ENCODE measurements at regions of chr15 and their contacts with region 1.

Region 1: DNA sequence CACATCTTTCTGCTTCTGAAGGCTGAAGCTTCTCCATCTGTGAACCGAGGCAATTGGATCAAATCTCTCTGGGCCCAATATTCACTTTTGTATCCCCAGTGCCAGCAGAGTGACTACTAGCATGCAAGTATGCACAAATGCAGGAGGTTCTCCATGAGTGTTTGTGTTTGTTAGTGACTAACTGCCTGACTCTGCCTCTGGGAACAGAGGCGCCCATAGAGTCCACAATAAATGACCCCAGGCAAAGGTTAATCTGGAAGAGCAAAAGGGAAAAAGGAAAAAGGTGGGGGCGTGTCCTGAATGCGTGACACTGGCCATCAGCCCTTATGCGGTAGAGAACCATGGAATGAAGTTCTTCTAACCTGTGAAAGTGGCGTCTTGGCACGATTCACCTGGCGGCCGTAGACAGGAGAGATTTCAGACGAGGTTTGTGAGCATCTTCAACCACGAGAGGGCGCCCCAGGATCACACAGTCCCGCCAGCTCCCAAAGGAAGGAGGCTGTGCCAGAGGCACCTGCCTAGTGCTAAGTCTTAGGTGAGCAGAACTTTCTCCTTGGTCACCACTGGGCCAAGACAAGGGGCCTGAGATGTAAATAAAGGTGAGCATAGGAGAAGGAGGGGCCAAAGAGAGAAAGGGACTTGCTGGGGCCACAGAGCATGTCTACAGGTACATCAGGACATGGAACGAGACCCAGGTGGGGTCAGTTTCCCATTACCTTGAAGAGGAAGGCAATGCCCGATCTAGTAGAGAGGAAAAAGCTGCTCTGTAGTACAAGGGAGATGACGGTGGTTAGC is 44.2 kb downstream of the RBPMS2 start:
- DNase-seq: peak; percentile 67
- ATAC-seq: peak; percentile 79
- H3K4me3 ChIP-seq: no peak overlapping the region
- H3K27ac ChIP-seq: no peak overlapping the region
- H3K4me1 ChIP-seq: peaks cover 33% of the 10 kb centered on the region
- H3K27me3 ChIP-seq: peaks cover 0 to 12% of the 10 kb centered on the region in 2 experiments; a peak in 2 of 5 replicates
- CTCF ChIP-seq: peak; percentile 96
- EP300 ChIP-seq: no peak
- POLR2A ChIP-seq: no peak
- RAD21 ChIP-seq: peak; percentile 92

Region 2: GRCh38 chr15:64690578-64691296 is 40.5 kb before region 1 on chr15:
- CTCF ChIA-PET with region 1: interaction called, 56 read pairs
- POLR2A ChIA-PET with region 1: interaction called, 3 read pairs
- in situ Hi-C with region 1: loop called (anchors 5 kb)
- intact Hi-C with region 1: loop called (anchors 1 kb)
- DNase-seq: no peak
- ATAC-seq: peak; percentile 19; the same call in 1 of the 3 replicates
- H3K4me3 ChIP-seq: no peak overlapping the region
- H3K27ac ChIP-seq: no peak overlapping the region
- H3K4me1 ChIP-seq: peaks cover 23% of the 10 kb centered on the region
- H3K27me3 ChIP-seq: no peaks in the 10 kb centered on the region
- CTCF ChIP-seq: no peak
- EP300 ChIP-seq: no peak
- POLR2A ChIP-seq: no peak
- RAD21 ChIP-seq: no peak

Region 3: DNA sequence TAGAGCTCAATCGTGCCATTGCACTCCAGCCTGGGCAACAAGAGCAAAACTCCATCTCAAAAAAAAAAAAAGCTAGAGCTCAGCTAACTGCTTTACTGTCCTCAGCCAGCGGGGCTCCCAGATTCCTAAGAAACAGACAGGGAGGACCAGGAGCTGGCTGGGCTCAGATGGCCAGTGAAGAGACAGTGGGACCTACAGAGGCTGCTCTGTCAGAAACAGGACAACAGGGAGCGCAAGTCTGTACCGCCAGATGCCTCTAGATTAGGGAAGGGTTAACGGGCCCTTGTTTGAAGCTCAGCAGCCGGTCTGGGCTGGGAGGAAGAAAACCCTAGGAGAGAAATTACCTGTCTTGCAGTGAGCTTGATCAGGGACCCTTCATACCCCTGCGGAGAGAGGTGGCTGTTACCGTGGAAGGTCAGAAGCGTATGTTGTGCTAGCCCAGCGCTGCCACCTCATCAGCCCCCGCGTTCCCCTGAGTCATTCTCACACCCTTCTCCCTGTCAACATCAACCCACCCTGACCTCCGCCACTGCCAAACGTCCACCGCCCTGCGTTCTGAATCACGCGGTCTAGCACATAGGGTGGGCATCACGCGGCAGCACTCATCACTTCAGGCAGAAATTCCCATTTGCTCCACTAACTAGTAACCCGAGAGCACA is 18.9 kb after region 1 on chr15:
- CTCF ChIA-PET with region 1: no interaction called
- POLR2A ChIA-PET with region 1: no interaction called
- in situ Hi-C with region 1: no loop called
- intact Hi-C with region 1: no loop called
- DNase-seq: no peak
- ATAC-seq: peak; percentile 64
- H3K4me3 ChIP-seq: no peak overlapping the region
- H3K27ac ChIP-seq: no peak overlapping the region
- H3K4me1 ChIP-seq: peaks cover 12% of the 10 kb centered on the region
- H3K27me3 ChIP-seq: peaks cover 3 to 72% of the 10 kb centered on the region in 2 experiments; a peak in 4 of 5 replicates
- CTCF ChIP-seq: no peak
- EP300 ChIP-seq: no peak
- POLR2A ChIP-seq: no peak
- RAD21 ChIP-seq: no peak

Region 4: GRCh38 chr15:64809649-64810496 is 78.7 kb after region 1 on chr15:
- CTCF ChIA-PET with region 1: interaction called, 46 read pairs
- POLR2A ChIA-PET with region 1: interaction called, 8 read pairs
- in situ Hi-C with region 1: loop called (anchors 5 kb)
- intact Hi-C with region 1: loop called (anchors 1 kb)
- DNase-seq: peak; percentile 61
- ATAC-seq: peak; percentile 76
- H3K4me3 ChIP-seq: no peak overlapping the region
- H3K27ac ChIP-seq: no peak overlapping the region
- H3K4me1 ChIP-seq: peaks cover 29% of the 10 kb centered on the region
- H3K27me3 ChIP-seq: peaks cover 1 to 17% of the 10 kb centered on the region in 2 experiments; a peak in 2 of 5 replicates
- CTCF ChIP-seq: peak; percentile 94
- EP300 ChIP-seq: no peak
- POLR2A ChIP-seq: no peak
- RAD21 ChIP-seq: peak; percentile 83

Region 5: GRCh38 chr15:64893481-64894394 is 162.5 kb after region 1 on chr15:
- CTCF ChIA-PET with region 1: interaction called, 3 read pairs
- POLR2A ChIA-PET with region 1: interaction called, 3 read pairs
- in situ Hi-C with region 1: no loop called
- intact Hi-C with region 1: loop called (anchors 5 kb)
- DNase-seq: peak; percentile 79
- ATAC-seq: peak; percentile 74
- H3K4me3 ChIP-seq: peak overlapping the region in 2 of 3 experiments; percentile 8 to 74; a peak in 2 of 6 replicates
- H3K27ac ChIP-seq: no peak overlapping the region
- H3K4me1 ChIP-seq: peaks cover 63% of the 10 kb centered on the region
- H3K27me3 ChIP-seq: peaks cover 0 to 22% of the 10 kb centered on the region in 2 experiments; a peak in 3 of 5 replicates
- CTCF ChIP-seq: no peak
- EP300 ChIP-seq: no peak
- POLR2A ChIP-seq: 0 out of 4 replicates have a peak, but pooled peaks of 1 of the 2 experiments have one; percentile 39
- RAD21 ChIP-seq: no peak

Region 6: GRCh38 chr15:64905119-64905831 is 174.1 kb after region 1 on chr15:
- CTCF ChIA-PET with region 1: interaction called, 20 read pairs
- POLR2A ChIA-PET with region 1: no interaction called
- in situ Hi-C with region 1: no loop called
- intact Hi-C with region 1: loop called (anchors 1 kb)
- DNase-seq: peak; percentile 22
- ATAC-seq: peak; percentile 89
- H3K4me3 ChIP-seq: no peak overlapping the region
- H3K27ac ChIP-seq: no peak overlapping the region
- H3K4me1 ChIP-seq: peaks cover 4% of the 10 kb centered on the region; the same call in 1 of the 2 replicates
- H3K27me3 ChIP-seq: 0 out of 5 replicates have a peak, but pooled peaks cover 0 to 3% of the 10 kb centered on the region in 2 experiments
- CTCF ChIP-seq: peak; percentile 81
- EP300 ChIP-seq: no peak
- POLR2A ChIP-seq: no peak
- RAD21 ChIP-seq: peak; percentile 68